CD8-positive, alpha-beta T cell (primary cell): ENCODE measurements at regions of chr6 and their contacts with region 1.

Region 1: DNA sequence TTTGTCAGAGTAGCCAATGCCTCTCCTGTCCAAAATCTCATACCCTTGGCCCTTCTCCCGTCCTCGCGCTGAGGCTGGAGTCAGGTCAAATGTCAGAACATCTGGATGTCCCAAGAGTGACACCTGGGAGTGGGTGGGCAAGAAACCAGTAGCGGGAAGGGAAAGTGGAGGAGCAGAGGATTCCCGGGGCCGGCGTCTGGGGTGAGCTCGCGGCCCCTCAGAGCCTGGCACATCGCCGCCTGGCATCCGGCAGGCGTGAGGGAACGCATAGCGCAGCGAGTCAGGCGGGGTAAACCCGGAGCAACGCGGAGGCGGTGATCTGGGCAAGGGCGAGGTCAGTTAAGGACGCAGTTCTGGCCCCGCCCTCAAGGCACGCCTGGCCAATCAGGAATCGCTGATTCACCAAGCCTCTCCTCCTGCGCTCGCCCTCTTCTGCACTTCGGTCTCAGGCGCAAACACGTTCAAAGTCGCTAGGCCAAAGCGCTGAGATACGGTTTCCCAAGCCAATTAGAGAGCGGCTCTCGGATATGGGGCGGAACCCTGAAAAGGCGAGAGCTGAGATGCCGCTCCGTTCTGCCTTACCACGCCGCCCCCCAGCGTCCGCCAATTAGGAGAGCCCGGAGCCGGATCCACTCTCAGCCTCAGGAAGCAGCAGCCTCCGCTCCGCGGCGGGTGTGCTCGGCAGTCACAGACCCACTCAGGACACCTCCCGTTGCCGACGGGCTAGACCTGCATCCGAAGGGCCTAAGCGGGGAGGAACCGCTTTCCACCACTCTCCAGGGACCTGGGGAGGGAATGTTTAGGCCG is 22.5 kb downstream of the VPS52 start:
- DNase-seq: peak; percentile 90 to 100 (median 95)
- ATAC-seq: peak; percentile 85
- H3K4me3 ChIP-seq: peak overlapping the region; percentile 66 to 71
- H3K4me3 Mint-ChIP-seq: peak overlapping the region; percentile 91
- H3K27ac ChIP-seq: peak overlapping the region; percentile 85 to 98
- H3K27ac Mint-ChIP-seq: peak overlapping the region; percentile 93
- H3K4me1 ChIP-seq: peaks cover 25% of the 10 kb centered on the region
- H3K4me1 Mint-ChIP-seq: peaks cover 38% of the 10 kb centered on the region
- H3K27me3 ChIP-seq: peaks cover 0 to 3% of the 10 kb centered on the region in 2 experiments
- H3K27me3 Mint-ChIP-seq: no peaks in the 10 kb centered on the region
- CTCF ChIP-seq: no peak

Region 2: GRCh38 chr6:33014841-33015634 is 234.1 kb before region 1 on chr6:
- CTCF ChIA-PET with region 1: interaction called, 41 read pairs
- POLR2A ChIA-PET with region 1: interaction called, 4 read pairs
- intact Hi-C with region 1: loop called (anchors 1 kb)
- DNase-seq: peak in 7 of 9 experiments; percentile 43 to 89 (median 56)
- ATAC-seq: peak; percentile 74
- H3K4me3 ChIP-seq: no peak overlapping the region
- H3K4me3 Mint-ChIP-seq: no peak overlapping the region
- H3K27ac ChIP-seq: no peak overlapping the region
- H3K27ac Mint-ChIP-seq: no peak overlapping the region
- H3K4me1 ChIP-seq: peaks cover 23% of the 10 kb centered on the region
- H3K4me1 Mint-ChIP-seq: peaks cover 35% of the 10 kb centered on the region
- H3K27me3 ChIP-seq: no peaks in the 10 kb centered on the region
- H3K27me3 Mint-ChIP-seq: no peaks in the 10 kb centered on the region
- CTCF ChIP-seq: peak; percentile 87

Region 3: GRCh38 chr6:33147807-33148666 is 101.1 kb before region 1 on chr6:
- CTCF ChIA-PET with region 1: interaction called, 24 read pairs
- POLR2A ChIA-PET with region 1: no interaction called
- intact Hi-C with region 1: no loop called
- DNase-seq: peak in 2 of 9 experiments; percentile 42 to 52
- ATAC-seq: no peak
- H3K4me3 ChIP-seq: no peak overlapping the region
- H3K4me3 Mint-ChIP-seq: no peak overlapping the region
- H3K27ac ChIP-seq: no peak overlapping the region
- H3K27ac Mint-ChIP-seq: no peak overlapping the region
- H3K4me1 ChIP-seq: no peaks in the 10 kb centered on the region
- H3K4me1 Mint-ChIP-seq: peaks cover 2% of the 10 kb centered on the region
- H3K27me3 ChIP-seq: no peaks in the 10 kb centered on the region
- H3K27me3 Mint-ChIP-seq: peaks cover 18% of the 10 kb centered on the region
- CTCF ChIP-seq: peak; percentile 71

Region 4: DNA sequence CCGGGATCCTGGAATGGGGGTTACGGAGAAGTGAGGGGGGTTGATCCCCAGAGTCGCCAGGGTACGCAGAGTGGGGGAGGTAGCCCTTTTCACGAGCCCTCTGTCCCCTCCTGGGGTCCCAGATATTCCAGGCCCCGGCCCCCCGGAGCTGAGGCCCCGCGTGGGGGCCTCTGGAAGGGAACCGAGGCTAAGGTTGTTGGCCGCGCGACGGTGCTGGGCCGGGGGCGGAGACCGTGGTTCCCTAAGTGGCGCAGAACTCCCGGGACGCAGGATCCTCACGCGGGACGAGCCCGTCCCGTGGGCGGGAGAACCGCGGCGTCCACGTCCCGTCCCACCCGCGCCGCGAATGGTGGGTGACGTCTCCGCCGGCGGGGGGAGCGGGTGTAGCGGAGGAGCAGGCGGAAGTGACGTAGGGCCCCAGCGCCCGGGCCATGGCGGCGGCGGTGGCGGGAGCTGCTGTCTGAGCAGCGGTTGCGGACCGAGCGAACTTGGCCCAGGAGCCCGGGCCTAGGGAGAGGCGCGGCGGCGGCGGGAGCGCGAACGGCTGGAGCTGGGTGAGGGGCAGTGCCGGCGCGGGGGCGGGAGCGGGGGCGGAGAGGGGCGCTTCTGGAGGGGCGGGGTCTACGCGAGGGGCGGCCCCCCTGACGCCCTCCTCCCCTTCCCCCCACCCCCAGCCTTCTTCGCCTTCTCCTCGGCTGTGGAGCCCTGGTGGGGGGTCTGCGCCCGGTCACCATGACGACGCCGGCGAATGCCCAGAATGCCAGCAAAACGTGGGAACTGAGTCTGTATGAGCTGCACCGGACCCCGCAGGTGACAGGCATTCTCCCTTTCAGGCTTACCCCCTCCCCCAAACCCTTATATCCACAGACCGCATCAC is 40.8 kb before region 1 on chr6 and contains the start of gene RING1:
- CTCF ChIA-PET with region 1: interaction called, 13 read pairs
- POLR2A ChIA-PET with region 1: interaction called, 13 read pairs
- intact Hi-C with region 1: loop called (anchors 1 kb)
- DNase-seq: peak; percentile 72 to 94 (median 87)
- ATAC-seq: peak; percentile 59
- H3K4me3 ChIP-seq: peak within 1 kb of the TSS; percentile 96 to 97
- H3K4me3 Mint-ChIP-seq: peak within 1 kb of the TSS; percentile 94
- H3K27ac ChIP-seq: peak within 1 kb of the TSS; percentile 91 to 98
- H3K27ac Mint-ChIP-seq: peak within 1 kb of the TSS; percentile 96
- H3K4me1 ChIP-seq: peaks cover 51% of the 10 kb centered on the region
- H3K4me1 Mint-ChIP-seq: peaks cover 57% of the 10 kb centered on the region
- H3K27me3 ChIP-seq: peaks cover 0 to 6% of the 10 kb centered on the region in 2 experiments
- H3K27me3 Mint-ChIP-seq: no peaks in the 10 kb centered on the region
- CTCF ChIP-seq: no peak
- total RNA-seq, gene RING1: 29.1 to 29.5 TPM

Region 5: GRCh38 chr6:33271458-33272274 is 22.5 kb after region 1 on chr6 and contains the starts of genes RPS18 and VPS52:
- CTCF ChIA-PET with region 1: interaction called, 29 read pairs
- POLR2A ChIA-PET with region 1: interaction called, 23 read pairs
- intact Hi-C with region 1: loop called (anchors 1 kb)
- DNase-seq: peak; percentile 82 to 99 (median 90)
- ATAC-seq: peak; percentile 85
- H3K4me3 ChIP-seq: peak within 1 kb of the TSS; percentile 74 to 82
- H3K4me3 Mint-ChIP-seq: peak within 1 kb of the TSS; percentile 100
- H3K27ac ChIP-seq: peak within 1 kb of the TSS; percentile 87 to 95
- H3K27ac Mint-ChIP-seq: peak within 1 kb of the TSS; percentile 100
- H3K4me1 ChIP-seq: peaks cover 44% of the 10 kb centered on the region
- H3K4me1 Mint-ChIP-seq: peaks cover 62% of the 10 kb centered on the region
- H3K27me3 ChIP-seq: no peaks in the 10 kb centered on the region
- H3K27me3 Mint-ChIP-seq: no peaks in the 10 kb centered on the region
- CTCF ChIP-seq: no peak
- total RNA-seq, gene RPS18: 4,154 to 4,290 TPM
- total RNA-seq, gene VPS52: 72.2 to 75.9 TPM

Region 6: GRCh38 chr6:33299237-33299944 is 50.3 kb after region 1 on chr6:
- CTCF ChIA-PET with region 1: no interaction called
- POLR2A ChIA-PET with region 1: interaction called, 11 read pairs
- intact Hi-C with region 1: loop called (anchors 1 kb)
- DNase-seq: peak; percentile 82 to 97 (median 94)
- ATAC-seq: peak; percentile 83
- H3K4me3 ChIP-seq: peak overlapping the region; percentile 88 to 91
- H3K4me3 Mint-ChIP-seq: peak overlapping the region; percentile 99
- H3K27ac ChIP-seq: peak overlapping the region; percentile 83 to 96
- H3K27ac Mint-ChIP-seq: peak overlapping the region; percentile 99
- H3K4me1 ChIP-seq: peaks cover 14% of the 10 kb centered on the region
- H3K4me1 Mint-ChIP-seq: peaks cover 41% of the 10 kb centered on the region
- H3K27me3 ChIP-seq: no peaks in the 10 kb centered on the region
- H3K27me3 Mint-ChIP-seq: no peaks in the 10 kb centered on the region
- CTCF ChIP-seq: peak; percentile 70

Region 7: DNA sequence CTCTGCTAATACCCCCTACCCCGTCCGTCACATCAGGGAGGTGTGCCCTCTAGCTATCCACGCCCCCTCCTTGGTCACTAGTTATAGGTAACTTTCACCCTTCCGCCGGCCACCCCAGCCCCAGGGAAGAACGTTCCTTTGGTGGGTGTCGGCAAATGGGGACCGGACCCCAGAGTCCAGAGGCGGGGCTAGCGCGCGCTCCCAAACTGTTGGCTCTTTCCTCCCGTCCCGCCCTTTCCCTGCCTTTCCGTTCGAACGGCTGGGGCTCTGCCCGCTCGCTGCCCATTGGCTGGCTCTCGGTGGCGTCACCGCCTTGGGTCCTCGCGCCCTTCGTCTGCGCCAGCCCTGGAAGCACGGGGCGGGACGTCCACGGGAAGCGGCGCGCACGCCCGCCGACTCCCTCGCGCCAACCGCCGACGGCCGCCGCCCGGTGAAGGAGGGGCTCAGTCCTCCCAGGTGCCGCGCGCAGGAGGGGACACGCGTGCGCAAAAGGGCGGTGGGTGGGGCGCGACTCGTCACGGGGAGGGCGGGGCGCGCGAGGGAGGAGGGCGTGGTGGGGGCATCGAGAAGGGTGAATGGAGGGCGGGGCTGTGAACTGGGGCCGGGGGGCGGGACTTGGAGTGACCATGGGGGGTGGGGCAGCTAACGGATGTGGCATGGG is 161.1 kb after region 1 on chr6:
- CTCF ChIA-PET with region 1: no interaction called
- POLR2A ChIA-PET with region 1: no interaction called
- intact Hi-C with region 1: loop called in 1 of 2 experiments (anchors 1 kb)
- DNase-seq: peak; percentile 93 to 99 (median 99)
- ATAC-seq: peak; percentile 68
- H3K4me3 ChIP-seq: peak overlapping the region; percentile 82 to 95
- H3K4me3 Mint-ChIP-seq: peak overlapping the region; percentile 88
- H3K27ac ChIP-seq: peak overlapping the region; percentile 94 to 96
- H3K27ac Mint-ChIP-seq: peak overlapping the region; percentile 91
- H3K4me1 ChIP-seq: peaks cover 40% of the 10 kb centered on the region
- H3K4me1 Mint-ChIP-seq: peaks cover 47% of the 10 kb centered on the region
- H3K27me3 ChIP-seq: no peaks in the 10 kb centered on the region
- H3K27me3 Mint-ChIP-seq: no peaks in the 10 kb centered on the region
- CTCF ChIP-seq: no peak